ENCODE measurements at regions of chr15 and their contacts with region 1.

Region 1: DNA sequence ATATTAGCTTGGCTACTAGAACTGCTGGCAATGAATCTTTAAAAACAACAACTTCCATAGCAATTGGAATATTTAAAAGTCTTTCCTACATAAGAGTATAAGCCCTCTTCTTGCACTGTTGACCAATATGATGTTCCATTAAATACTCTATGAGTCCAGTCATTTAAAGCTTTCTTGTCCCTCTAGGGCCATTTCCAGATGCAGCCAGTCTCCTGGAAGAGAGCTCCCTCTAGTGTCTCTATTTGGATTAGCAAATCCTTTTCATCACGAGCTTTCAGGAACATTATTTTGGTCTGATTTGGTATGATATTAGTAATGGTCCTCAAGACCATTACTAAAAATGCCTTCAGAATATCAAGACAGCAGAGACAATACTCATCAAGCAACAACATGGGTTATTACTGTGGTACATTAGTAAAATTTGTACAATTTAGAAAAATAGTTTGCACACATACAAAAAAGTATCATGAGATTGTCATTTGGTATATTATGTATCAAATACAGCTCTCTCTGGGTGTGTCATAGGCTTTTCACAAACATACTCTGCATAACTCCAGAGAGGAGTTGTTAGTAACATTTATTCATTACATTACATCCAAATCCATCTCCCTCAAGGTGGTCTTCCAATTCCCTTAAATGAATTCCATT is 101.3 kb downstream of the DPH6 start:
- DNase-seq: no peak
- H3K4me3 ChIP-seq: no peak overlapping the region
- H3K27ac ChIP-seq: no peak overlapping the region
- H3K4me1 ChIP-seq: peaks cover under 1% of the 10 kb centered on the region
- H3K27me3 ChIP-seq: no peaks in the 10 kb centered on the region
- CTCF ChIP-seq: peak; percentile 50 to 62 (median 61)
- POLR2A ChIP-seq: no peak

Region 2: GRCh38 chr15:35078221-35078915 is 366.3 kb before region 1 on chr15:
- intact Hi-C with region 1: loop called (anchors 10 kb)
- DNase-seq: no peak
- H3K4me3 ChIP-seq: no peak overlapping the region
- H3K27ac ChIP-seq: no peak overlapping the region
- H3K4me1 ChIP-seq: no peaks in the 10 kb centered on the region
- H3K27me3 ChIP-seq: no peaks in the 10 kb centered on the region
- CTCF ChIP-seq: peak; percentile 68 to 85 (median 74)
- POLR2A ChIP-seq: no peak

Measured in vagina (tissue), 2 donors.